Transverse colon (tissue), 4 donors: ENCODE measurements at regions of chr5 and their contacts with region 1.

Region 1: GRCh38 chr5:149834246-149834855 is 104.2 kb downstream of the PPARGC1B start:
- DNase-seq: peak; percentile 71
- H3K4me3 ChIP-seq: no peak overlapping the region
- H3K27ac ChIP-seq: no peak overlapping the region
- H3K4me1 ChIP-seq: peaks cover 0 to 13% (median 6%) of the 10 kb centered on the region in 4 donors
- H3K27me3 ChIP-seq: no peaks in the 10 kb centered on the region
- CTCF ChIP-seq: peak; percentile 50 to 65 (median 62)
- EP300 ChIP-seq: no peak
- POLR2A ChIP-seq: no peak

Region 2: GRCh38 chr5:149636851-149637246 is 197.5 kb before region 1 on chr5:
- in situ Hi-C with region 1: loop called (anchors 5 to 10 kb)
- intact Hi-C with region 1: no loop called
- DNase-seq: no peak
- H3K4me3 ChIP-seq: no peak overlapping the region
- H3K27ac ChIP-seq: no peak overlapping the region
- H3K4me1 ChIP-seq: peaks cover 25 to 36% (median 30%) of the 10 kb centered on the region in 4 donors
- H3K27me3 ChIP-seq: no peaks in the 10 kb centered on the region
- CTCF ChIP-seq: peak; percentile 70 to 96 (median 83)
- EP300 ChIP-seq: no peak
- POLR2A ChIP-seq: no peak

Region 3: GRCh38 chr5:149667084-149667828 is 167.1 kb before region 1 on chr5:
- in situ Hi-C with region 1: loop called in 2 of 4 experiments (anchors 10 kb)
- intact Hi-C with region 1: no loop called
- DNase-seq: peak; percentile 42
- H3K4me3 ChIP-seq: no peak overlapping the region
- H3K27ac ChIP-seq: peak overlapping the region; percentile 61 to 70 (median 66)
- H3K4me1 ChIP-seq: peaks cover 12 to 38% (median 19%) of the 10 kb centered on the region in 4 donors
- H3K27me3 ChIP-seq: no peaks in the 10 kb centered on the region
- CTCF ChIP-seq: peak; percentile 82 to 93 (median 92)
- EP300 ChIP-seq: no peak
- POLR2A ChIP-seq: no peak

Region 4: GRCh38 chr5:149990518-149991376 is 156.4 kb after region 1 on chr5:
- in situ Hi-C with region 1: loop called in 2 of 4 experiments (anchors 5 kb)
- intact Hi-C with region 1: loop called (anchors 5 kb)
- DNase-seq: peak; percentile 83
- H3K4me3 ChIP-seq: no peak overlapping the region
- H3K27ac ChIP-seq: peak overlapping the region in 1 of 4 donors; percentile 6
- H3K4me1 ChIP-seq: peaks cover 0 to 5% (median 2%) of the 10 kb centered on the region in 4 donors
- H3K27me3 ChIP-seq: no peaks in the 10 kb centered on the region
- CTCF ChIP-seq: peak; percentile 88 to 97 (median 92)
- EP300 ChIP-seq: no peak
- POLR2A ChIP-seq: no peak